ENCODE measurements at regions of chr15 and their contacts with region 1.

Region 1: GRCh38 chr15:64596701-64597476 is 136.5 kb downstream of the ZNF609 start:
- DNase-seq: no peak
- ATAC-seq: peak; percentile 37
- H3K4me3 Mint-ChIP-seq: peak overlapping the region; percentile 75
- H3K27ac Mint-ChIP-seq: peak overlapping the region; percentile 74
- H3K4me1 Mint-ChIP-seq: peaks cover 43% of the 10 kb centered on the region
- H3K27me3 Mint-ChIP-seq: no peaks in the 10 kb centered on the region
- CTCF ChIP-seq: no peak

Region 2: GRCh38 chr15:64634576-64635498 is 37.9 kb after region 1 on chr15:
- CTCF ChIA-PET with region 1: no interaction called
- POLR2A ChIA-PET with region 1: no interaction called
- intact Hi-C with region 1: loop called (anchors 5 kb)
- DNase-seq: no peak
- ATAC-seq: peak; percentile 45
- H3K4me3 Mint-ChIP-seq: no peak overlapping the region
- H3K27ac Mint-ChIP-seq: peak overlapping the region; percentile 35
- H3K4me1 Mint-ChIP-seq: peaks cover 31% of the 10 kb centered on the region
- H3K27me3 Mint-ChIP-seq: no peaks in the 10 kb centered on the region
- CTCF ChIP-seq: no peak

Region 3: DNA sequence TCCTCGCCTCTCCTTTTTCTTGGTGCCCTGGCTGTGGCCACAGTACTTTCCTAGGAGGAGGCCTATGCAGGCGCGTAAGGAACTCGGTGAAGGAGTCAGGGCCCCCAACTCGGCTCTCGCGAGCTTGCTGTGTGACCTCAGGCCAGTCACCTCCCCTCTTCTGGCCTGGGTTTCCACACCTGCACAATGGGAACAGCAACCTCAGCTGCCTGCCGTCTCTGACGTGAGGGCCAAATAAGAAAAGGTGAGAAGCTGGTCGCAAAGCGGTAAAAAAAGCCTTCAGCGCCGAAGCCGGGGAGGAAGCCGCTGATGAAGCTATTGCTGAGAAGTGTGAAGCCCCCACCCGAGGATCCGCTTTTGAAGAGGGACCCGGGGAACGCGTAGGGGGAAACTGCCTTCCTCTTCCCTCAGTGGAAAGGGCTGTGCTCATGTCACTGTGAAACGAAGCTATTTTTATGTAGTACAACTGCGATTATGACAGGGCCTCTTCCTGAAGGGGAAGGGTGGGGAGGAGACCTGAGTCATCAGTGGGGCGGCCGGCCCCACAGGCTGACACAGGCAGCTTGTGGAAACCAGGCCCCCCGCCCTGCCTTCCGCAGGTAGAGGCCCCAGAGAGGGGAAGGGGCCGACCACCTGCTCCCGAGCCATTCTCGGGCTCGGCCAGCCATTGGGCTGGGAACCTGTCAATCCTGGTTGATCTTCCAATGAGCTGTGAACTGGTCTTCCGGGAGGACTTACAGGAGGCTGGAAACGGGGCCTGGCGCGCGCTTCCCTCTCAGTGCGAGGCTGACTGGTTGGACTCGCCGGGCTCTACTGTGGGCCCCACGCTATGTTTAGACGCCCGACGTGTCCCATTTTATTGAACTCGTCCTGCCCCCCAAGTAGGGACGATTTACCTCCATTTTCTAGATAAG is 296.8 kb after region 1 on chr15:
- CTCF ChIA-PET with region 1: no interaction called
- POLR2A ChIA-PET with region 1: no interaction called
- intact Hi-C with region 1: no loop called
- DNase-seq: peak; percentile 90
- ATAC-seq: peak; percentile 72
- H3K4me3 Mint-ChIP-seq: peak overlapping the region; percentile 89
- H3K27ac Mint-ChIP-seq: peak overlapping the region; percentile 99
- H3K4me1 Mint-ChIP-seq: peaks cover 76% of the 10 kb centered on the region
- H3K27me3 Mint-ChIP-seq: no peaks in the 10 kb centered on the region
- CTCF ChIP-seq: no peak